H1 (cell line): ENCODE measurements at regions of chr5 and their contacts with region 1.

Region 1: DNA sequence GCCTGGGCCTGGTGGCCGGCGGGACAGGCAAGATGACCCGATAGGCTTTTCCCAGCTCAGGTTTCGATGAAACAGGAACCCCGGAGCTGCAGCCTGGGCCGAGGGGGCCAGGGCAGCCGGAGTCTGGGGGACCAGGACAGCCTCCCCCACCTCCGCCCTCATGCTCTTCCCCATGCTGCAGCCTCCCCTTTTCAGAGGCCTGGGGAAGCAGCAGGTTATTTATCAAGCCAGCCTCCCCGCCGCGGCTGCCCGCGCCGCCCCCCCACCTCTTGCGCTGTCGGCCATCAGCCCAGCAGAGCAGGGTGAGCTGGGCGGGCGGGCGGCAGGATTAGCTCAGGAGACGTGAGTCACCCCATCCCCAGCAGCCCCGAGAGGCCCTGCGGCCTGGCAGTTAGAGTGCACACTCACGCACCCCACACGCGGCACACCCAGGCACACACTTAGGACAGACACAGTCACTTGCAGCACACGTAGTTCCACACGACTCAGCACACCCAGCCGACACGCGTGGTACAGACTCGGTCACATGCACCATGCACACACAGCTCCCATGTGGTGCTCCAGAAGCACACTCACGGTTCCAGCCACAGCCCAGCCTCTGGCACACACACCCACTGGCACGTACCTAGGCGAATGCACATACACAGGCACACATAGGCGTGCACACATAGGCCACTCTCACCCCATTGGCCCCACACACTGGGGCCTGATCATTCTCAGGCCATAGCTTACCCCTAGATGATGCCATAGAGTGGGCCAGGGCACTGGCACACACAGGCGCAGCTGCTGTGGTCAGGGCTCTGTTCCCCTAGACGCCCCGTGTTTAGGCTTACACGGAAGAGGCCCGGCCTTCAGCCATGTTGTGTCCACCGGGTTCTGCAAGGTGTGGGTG is 13.0 kb downstream of the CXXC5 start:
- DNase-seq: no peak
- H3K4me3 ChIP-seq: no peak overlapping the region
- H3K27ac ChIP-seq: 0 out of 2 replicates have a peak overlapping the region, but pooled peaks have one; percentile 32
- H3K4me1 ChIP-seq: peaks cover 13 to 55% (median 46%) of the 10 kb centered on the region in 4 experiments
- H3K27me3 ChIP-seq: no peaks in the 10 kb centered on the region
- CTCF ChIP-seq: no peak
- EP300 ChIP-seq: no peak
- POLR2A ChIP-seq: no peak
- RAD21 ChIP-seq: no peak

Region 2: GRCh38 chr5:139678751-139679750 is 17.9 kb after region 1 on chr5:
- CTCF ChIA-PET with region 1: interaction called, 25 read pairs
- POLR2A ChIA-PET with region 1: interaction called, 10 read pairs
- DNase-seq: no peak
- H3K4me3 ChIP-seq: no peak overlapping the region
- H3K27ac ChIP-seq: no peak overlapping the region
- H3K4me1 ChIP-seq: peaks cover 8 to 43% (median 26%) of the 10 kb centered on the region in 4 experiments
- H3K27me3 ChIP-seq: no peaks in the 10 kb centered on the region
- CTCF ChIP-seq: no peak
- EP300 ChIP-seq: no peak
- POLR2A ChIP-seq: no peak
- RAD21 ChIP-seq: no peak

Region 3: GRCh38 chr5:139684881-139685749 is 23.9 kb after region 1 on chr5:
- CTCF ChIA-PET with region 1: interaction called, 25 read pairs
- POLR2A ChIA-PET with region 1: interaction called, 10 read pairs
- DNase-seq: no peak
- H3K4me3 ChIP-seq: no peak overlapping the region
- H3K27ac ChIP-seq: no peak overlapping the region
- H3K4me1 ChIP-seq: peaks cover 37 to 67% (median 57%) of the 10 kb centered on the region in 4 experiments
- H3K27me3 ChIP-seq: no peaks in the 10 kb centered on the region
- CTCF ChIP-seq: peak in 1 of 3 experiments; percentile 27; a peak in 2 of 4 replicates
- EP300 ChIP-seq: no peak
- POLR2A ChIP-seq: no peak
- RAD21 ChIP-seq: peak in 1 of 2 experiments; percentile 25; a peak in 2 of 4 replicates

Region 4: DNA sequence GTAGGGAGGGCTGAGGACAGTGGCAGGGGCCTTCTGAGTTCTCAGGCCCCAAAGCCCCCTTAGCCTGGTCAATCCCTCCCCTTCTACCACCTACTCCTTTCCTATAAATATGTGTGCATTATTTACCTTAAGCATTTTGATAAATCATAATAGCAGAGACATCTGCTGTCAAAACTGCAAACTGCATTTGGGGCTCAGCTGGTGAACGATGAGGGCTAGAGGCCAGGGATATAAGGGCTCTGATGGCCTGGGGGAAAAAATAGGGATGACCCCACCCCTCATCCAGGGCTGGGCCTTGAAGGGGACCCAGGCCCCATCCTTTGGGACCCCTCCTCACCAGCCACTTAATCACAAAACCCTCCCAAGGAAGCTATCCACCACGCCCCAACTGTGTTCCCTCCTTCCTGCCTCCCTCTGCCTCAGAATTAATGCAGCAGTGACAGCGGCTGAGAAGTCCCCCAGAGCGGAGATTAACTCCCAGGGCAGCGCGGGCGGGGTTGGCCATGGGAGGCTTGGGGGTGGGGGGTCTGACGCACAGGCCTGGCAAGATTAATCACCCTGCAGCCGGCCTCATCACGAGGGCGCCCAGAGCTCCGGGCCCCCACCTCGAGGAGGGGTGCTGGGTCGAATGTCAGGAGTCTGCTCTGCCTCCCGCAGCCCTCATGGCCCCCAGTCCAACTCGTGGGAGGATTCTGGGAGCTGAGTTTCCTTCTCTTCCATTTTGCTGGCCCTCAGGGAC is 29.1 kb after region 1 on chr5:
- CTCF ChIA-PET with region 1: interaction called, 25 read pairs
- POLR2A ChIA-PET with region 1: interaction called, 10 read pairs
- DNase-seq: no peak
- H3K4me3 ChIP-seq: no peak overlapping the region
- H3K27ac ChIP-seq: no peak overlapping the region
- H3K4me1 ChIP-seq: peaks cover 27 to 51% (median 43%) of the 10 kb centered on the region in 4 experiments
- H3K27me3 ChIP-seq: peaks cover 0 to 5% (median 0%) of the 10 kb centered on the region in 4 experiments; a peak in 3 of 7 replicates
- CTCF ChIP-seq: no peak
- EP300 ChIP-seq: no peak
- POLR2A ChIP-seq: no peak
- RAD21 ChIP-seq: 0 out of 4 replicates have a peak, but pooled peaks of 1 of the 2 experiments have one; percentile 19

Region 5: DNA sequence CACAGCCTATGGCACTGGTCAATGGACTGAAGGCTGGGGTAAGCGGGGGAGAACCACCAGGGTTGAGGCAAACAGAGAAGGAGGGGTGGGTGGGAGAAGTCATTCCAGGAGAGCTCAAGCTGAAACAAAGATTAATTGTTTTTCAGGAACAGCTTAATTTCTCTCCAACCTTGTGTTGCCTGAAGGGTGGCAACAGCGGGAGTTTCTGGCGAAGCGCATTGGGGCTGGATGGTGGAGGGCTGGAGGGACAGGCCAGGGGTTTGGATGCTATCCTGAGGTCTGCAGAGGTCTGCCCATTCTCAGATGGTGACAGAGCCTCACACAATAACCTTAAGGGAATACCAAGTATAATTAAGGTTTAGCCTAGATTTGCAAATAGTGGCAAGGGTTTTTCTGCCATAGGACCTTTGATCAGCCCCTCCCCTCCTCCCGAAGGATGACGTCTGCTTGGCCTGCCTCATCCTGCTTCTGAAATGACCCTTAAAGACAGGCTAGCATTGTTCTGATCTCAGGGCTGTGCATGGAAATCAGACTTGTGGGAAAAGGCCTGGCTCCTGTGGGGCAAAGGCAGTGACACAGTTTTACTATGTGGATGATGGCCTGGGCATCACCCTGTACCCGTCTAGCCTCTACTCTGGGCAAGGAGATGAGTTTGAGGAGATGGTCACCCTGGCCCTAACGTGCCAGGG is 167.2 kb after region 1 on chr5:
- CTCF ChIA-PET with region 1: no interaction called
- POLR2A ChIA-PET with region 1: no interaction called
- DNase-seq: no peak
- H3K4me3 ChIP-seq: no peak overlapping the region
- H3K27ac ChIP-seq: no peak overlapping the region
- H3K4me1 ChIP-seq: no peaks in the 10 kb centered on the region
- H3K27me3 ChIP-seq: peaks cover 0 to 2% (median 0%) of the 10 kb centered on the region in 4 experiments; a peak in 4 of 7 replicates
- CTCF ChIP-seq: no peak
- EP300 ChIP-seq: no peak
- POLR2A ChIP-seq: no peak
- RAD21 ChIP-seq: no peak

Region 6: GRCh38 chr5:140020601-140021177 is 359.5 kb after region 1 on chr5:
- CTCF ChIA-PET with region 1: no interaction called
- POLR2A ChIA-PET with region 1: no interaction called
- DNase-seq: no peak
- H3K4me3 ChIP-seq: no peak overlapping the region
- H3K27ac ChIP-seq: no peak overlapping the region
- H3K4me1 ChIP-seq: no peaks in the 10 kb centered on the region
- H3K27me3 ChIP-seq: peaks cover 0 to 2% (median 0%) of the 10 kb centered on the region in 4 experiments; a peak in 2 of 7 replicates
- CTCF ChIP-seq: no peak
- EP300 ChIP-seq: no peak
- POLR2A ChIP-seq: no peak
- RAD21 ChIP-seq: no peak